CD4-positive, alpha-beta T cell (primary cell): ENCODE measurements at regions of chr9 and their contacts with region 1.

Region 1: DNA sequence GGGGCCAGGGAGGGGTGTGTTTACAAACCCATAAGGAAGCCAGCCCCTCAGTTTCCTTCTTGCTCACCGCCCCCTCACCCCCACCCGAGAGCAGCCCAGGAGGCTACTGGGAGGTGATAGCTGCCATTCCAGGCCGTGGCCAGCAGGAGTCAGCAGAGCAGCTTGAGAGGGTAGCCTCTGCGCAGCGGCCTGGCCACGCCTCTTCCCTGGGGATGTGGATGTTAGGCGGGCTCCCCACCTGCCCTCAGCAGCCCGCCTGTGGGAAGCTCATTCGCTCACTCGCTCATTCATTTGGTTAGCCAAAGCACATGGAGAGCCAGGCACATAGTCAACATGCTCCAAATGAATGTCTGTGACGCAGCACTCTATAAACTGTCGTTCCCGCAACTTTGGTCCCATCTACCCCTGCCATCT is 6.1 kb upstream of the DPM2 start:
- DNase-seq: peak; percentile 59 to 89 (median 72)
- ATAC-seq: peak; percentile 74
- H3K4me3 ChIP-seq: no peak overlapping the region
- H3K4me3 Mint-ChIP-seq: peak overlapping the region; percentile 12
- H3K27ac ChIP-seq: peak overlapping the region in 1 of 2 donors; percentile 14
- H3K27ac Mint-ChIP-seq: peak overlapping the region; percentile 88
- H3K4me1 ChIP-seq: peaks cover 58% of the 10 kb centered on the region
- H3K4me1 Mint-ChIP-seq: peaks cover 58% of the 10 kb centered on the region
- H3K27me3 ChIP-seq: no peaks in the 10 kb centered on the region
- H3K27me3 Mint-ChIP-seq: no peaks in the 10 kb centered on the region
- CTCF ChIP-seq: peak; percentile 77

Region 2: GRCh38 chr9:127263664-127264063 is 680.1 kb before region 1 on chr9:
- CTCF ChIA-PET with region 1: no interaction called
- POLR2A ChIA-PET with region 1: no interaction called
- intact Hi-C with region 1: no loop called
- DNase-seq: no peak
- ATAC-seq: no peak
- H3K4me3 ChIP-seq: no peak overlapping the region
- H3K4me3 Mint-ChIP-seq: no peak overlapping the region
- H3K27ac ChIP-seq: no peak overlapping the region
- H3K27ac Mint-ChIP-seq: no peak overlapping the region
- H3K4me1 ChIP-seq: no peaks in the 10 kb centered on the region
- H3K4me1 Mint-ChIP-seq: no peaks in the 10 kb centered on the region
- H3K27me3 ChIP-seq: no peaks in the 10 kb centered on the region
- H3K27me3 Mint-ChIP-seq: peaks cover 6% of the 10 kb centered on the region
- CTCF ChIP-seq: no peak

Region 3: DNA sequence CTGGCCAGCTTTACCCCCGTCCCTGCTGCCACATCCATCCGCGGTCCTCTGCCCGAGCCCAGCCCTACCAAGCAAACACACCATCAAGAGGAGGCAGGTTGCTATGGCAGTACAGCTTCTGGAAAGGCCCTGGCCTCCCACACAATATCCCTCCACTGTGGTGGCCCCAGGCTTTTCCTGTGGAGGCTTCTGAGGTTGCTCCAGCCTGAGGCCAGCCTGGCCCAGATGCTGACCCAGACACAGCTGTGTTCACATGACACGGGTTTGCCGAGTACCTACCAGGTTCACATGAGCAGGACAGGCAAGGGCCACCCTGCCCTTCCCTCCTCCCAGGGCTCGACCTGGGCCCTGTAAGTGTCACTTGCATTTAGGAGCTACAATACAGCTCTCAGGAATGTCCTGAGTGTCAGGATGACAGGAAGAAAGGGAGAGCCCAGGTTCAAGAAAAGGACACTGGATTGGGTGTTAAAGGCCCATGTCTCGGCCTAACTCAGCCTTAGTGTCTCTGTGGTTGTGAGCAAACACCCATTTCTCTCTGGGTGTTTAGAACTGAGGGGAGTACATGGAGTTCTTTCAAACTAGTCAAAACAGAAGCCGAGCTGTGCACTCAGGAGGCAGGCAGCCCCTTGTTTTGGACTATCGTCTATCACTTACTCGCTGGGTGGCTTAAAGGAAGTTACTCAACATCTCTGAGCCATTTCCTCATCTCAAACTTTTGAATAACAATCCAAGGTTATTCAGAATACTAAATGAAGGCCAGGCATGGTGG is 83.2 kb after region 1 on chr9:
- CTCF ChIA-PET with region 1: interaction called, 8 read pairs
- POLR2A ChIA-PET with region 1: interaction called, 31 read pairs
- intact Hi-C with region 1: loop called in 1 of 2 experiments (anchors 2 kb)
- DNase-seq: peak in 13 of 14 experiments; percentile 30 to 75 (median 48)
- ATAC-seq: peak; percentile 10
- H3K4me3 ChIP-seq: peak overlapping the region; percentile 50
- H3K4me3 Mint-ChIP-seq: peak overlapping the region; percentile 80
- H3K27ac ChIP-seq: peak overlapping the region; percentile 93 to 94
- H3K27ac Mint-ChIP-seq: peak overlapping the region; percentile 94
- H3K4me1 ChIP-seq: peaks cover 100% of the 10 kb centered on the region
- H3K4me1 Mint-ChIP-seq: peaks cover 92% of the 10 kb centered on the region
- H3K27me3 ChIP-seq: no peaks in the 10 kb centered on the region
- H3K27me3 Mint-ChIP-seq: no peaks in the 10 kb centered on the region
- CTCF ChIP-seq: no peak

Region 4: DNA sequence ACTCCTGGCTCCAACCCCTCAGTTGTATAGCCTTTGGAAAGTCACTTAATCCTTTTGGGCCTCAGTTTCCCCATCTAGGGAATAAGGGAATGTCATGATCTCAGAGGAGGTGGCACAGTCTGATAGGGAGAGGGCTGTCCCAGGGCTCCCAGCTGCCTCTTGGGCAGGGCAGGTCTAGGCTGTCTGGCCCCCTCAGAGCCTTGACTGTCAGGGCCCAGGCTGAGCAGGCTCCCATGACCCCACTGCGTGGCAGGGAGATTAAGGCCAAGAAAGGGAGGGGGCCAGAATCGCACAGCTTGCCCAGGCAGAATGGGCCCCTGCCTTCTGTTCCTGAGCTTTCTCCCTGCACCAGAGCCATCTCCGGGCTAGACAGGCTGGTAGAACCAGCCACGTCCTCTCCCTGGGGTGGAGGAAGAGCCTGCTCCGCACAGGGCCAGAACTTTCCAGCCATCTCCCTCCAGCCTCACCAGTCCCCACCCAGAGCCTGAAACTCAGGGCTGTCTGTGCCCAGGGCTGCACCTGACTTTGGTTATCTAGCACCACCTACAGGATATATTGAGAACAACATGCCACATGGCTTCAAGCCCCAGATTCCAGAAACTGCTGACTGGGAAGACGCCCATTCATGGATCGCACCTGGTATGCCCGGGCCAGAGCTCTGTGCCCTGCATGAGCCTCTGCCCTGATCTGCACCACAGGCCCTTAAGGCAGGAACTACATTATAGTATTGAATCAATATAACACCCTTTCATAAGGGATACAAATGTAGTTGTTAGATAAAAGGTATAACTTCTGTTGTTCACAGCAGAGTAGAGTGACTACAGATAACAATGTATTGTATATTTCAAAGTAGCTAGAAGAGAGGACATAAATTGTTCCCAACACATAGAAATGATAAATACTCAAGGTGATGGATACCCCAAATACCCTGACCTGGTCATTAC is 91.4 kb after region 1 on chr9:
- CTCF ChIA-PET with region 1: interaction called, 67 read pairs
- POLR2A ChIA-PET with region 1: interaction called, 31 read pairs
- intact Hi-C with region 1: loop called (anchors 1 kb)
- DNase-seq: peak; percentile 45 to 90 (median 58)
- ATAC-seq: peak; percentile 42
- H3K4me3 ChIP-seq: no peak overlapping the region
- H3K4me3 Mint-ChIP-seq: peak overlapping the region; percentile 70
- H3K27ac ChIP-seq: peak overlapping the region in 1 of 2 donors; percentile 61
- H3K27ac Mint-ChIP-seq: peak overlapping the region; percentile 78
- H3K4me1 ChIP-seq: peaks cover 54% of the 10 kb centered on the region
- H3K4me1 Mint-ChIP-seq: peaks cover 42% of the 10 kb centered on the region
- H3K27me3 ChIP-seq: no peaks in the 10 kb centered on the region
- H3K27me3 Mint-ChIP-seq: no peaks in the 10 kb centered on the region
- CTCF ChIP-seq: peak; percentile 90